ENCODE measurements at regions of chrX and their contacts with region 1.

Region 1: GRCh38 chrX:136028251-136028984 is 43.2 kb downstream of the SLC9A6 start:
- DNase-seq: no peak
- H3K4me3 ChIP-seq: no peak overlapping the region
- H3K27ac ChIP-seq: peak overlapping the region; percentile 80 to 84 (median 84)
- H3K4me1 ChIP-seq: peaks cover 6 to 45% (median 34%) of the 10 kb centered on the region in 4 donors
- H3K27me3 ChIP-seq: no peaks in the 10 kb centered on the region
- CTCF ChIP-seq: peak; percentile 60 to 75 (median 65)
- EP300 ChIP-seq: no peak
- POLR2A ChIP-seq: no peak

Region 2: DNA sequence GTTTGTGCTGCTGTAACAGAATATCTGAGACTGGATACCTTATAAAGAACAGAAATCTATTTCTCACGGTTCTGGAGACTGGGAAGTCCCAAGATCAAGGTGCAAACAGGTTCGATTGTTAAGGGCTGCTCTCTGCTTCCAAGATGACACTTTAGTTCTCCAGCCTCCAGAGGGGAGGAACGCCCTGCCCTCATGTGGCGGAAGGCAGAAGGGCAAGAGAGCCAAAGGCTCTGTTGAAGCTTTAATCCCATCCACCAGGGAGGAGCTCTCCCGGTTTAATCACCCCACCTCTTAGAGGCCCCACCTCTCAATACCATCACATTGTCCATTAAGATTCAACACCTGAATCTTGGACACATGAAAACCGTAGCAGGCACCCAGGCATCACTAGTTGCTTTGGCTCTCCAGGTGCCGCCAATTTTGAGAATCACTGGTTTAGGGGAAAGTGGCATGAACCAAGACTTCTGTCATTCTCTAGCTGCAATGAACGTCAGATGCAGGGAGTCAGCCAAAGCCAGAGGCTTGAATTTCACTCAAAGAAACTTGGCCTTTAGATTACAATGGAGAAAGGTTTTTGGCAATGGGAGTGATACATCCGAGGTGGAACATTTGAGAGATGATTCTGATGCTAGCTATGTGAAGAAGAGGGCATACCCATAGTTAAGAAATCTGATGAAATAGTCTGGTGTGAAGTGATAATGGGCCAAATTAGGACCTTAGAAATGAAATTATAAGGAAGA is 134.6 kb after region 1 on chrX:
- intact Hi-C with region 1: loop called (anchors 5 kb)
- DNase-seq: no peak
- H3K4me3 ChIP-seq: no peak overlapping the region
- H3K27ac ChIP-seq: peak overlapping the region; percentile 94 to 99 (median 98)
- H3K4me1 ChIP-seq: peaks cover 35 to 100% (median 67%) of the 10 kb centered on the region in 4 donors
- H3K27me3 ChIP-seq: no peaks in the 10 kb centered on the region
- CTCF ChIP-seq: peak; percentile 66 to 71 (median 67)
- EP300 ChIP-seq: no peak
- POLR2A ChIP-seq: no peak

Region 3: GRCh38 chrX:136214551-136214950 is 186.1 kb after region 1 on chrX:
- intact Hi-C with region 1: loop called (anchors 2 kb)
- DNase-seq: no peak
- H3K4me3 ChIP-seq: no peak overlapping the region
- H3K27ac ChIP-seq: peak overlapping the region; percentile 86 to 99 (median 96)
- H3K4me1 ChIP-seq: peaks cover 0 to 21% (median 17%) of the 10 kb centered on the region in 4 donors
- H3K27me3 ChIP-seq: no peaks in the 10 kb centered on the region
- CTCF ChIP-seq: no peak
- EP300 ChIP-seq: no peak
- POLR2A ChIP-seq: no peak

Region 4: DNA sequence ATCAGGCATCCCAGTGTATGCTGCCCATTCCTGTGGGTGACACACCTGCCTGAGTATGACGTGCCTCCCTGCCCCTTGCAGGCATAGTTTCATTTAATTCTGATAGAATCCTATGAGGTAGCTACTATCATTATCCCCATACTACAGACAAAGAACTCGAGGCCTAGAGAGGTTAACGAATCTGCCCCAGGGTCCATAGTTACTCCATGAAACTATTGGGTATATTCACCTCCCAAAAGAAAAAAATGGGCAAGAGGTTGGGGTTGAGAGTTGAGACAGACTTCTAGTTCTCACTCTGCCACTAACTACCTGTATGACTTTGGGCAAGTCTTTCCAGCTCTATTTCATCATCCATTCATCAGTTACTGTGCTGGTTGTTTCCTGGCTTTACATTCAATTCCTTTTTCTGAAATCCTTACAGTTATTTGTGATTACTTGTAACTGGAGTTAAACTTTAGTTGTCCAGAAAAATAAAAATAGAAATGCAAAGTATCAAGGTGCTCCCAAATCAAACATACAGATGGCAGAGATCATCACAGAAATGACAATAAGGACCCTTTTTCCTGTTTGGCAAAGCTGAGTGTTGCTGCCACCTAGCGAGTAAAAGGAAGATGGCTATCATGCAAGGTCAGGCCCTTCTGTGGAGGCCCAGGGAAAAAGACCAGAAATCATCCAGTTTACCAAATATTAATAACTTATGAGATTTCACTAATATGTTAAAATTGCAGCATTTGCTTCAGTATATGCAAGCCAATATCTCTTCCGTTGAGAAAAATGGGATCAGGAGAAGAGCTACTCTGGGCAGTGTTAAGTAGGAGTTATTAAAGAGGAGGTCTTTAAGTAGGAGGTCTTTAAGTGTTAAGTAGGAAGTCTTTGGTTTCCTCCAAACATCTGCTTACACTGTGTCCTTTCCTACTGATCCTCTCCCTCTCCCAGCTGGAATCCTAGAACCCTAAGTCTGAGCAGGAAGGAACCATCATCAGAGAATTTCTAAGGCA is 239.9 kb after region 1 on chrX:
- intact Hi-C with region 1: loop called (anchors 2 kb)
- DNase-seq: no peak
- H3K4me3 ChIP-seq: no peak overlapping the region
- H3K27ac ChIP-seq: no peak overlapping the region
- H3K4me1 ChIP-seq: no peaks in the 10 kb centered on the region
- H3K27me3 ChIP-seq: no peaks in the 10 kb centered on the region
- CTCF ChIP-seq: peak; percentile 74 to 79 (median 79)
- EP300 ChIP-seq: no peak
- POLR2A ChIP-seq: no peak

Region 5: DNA sequence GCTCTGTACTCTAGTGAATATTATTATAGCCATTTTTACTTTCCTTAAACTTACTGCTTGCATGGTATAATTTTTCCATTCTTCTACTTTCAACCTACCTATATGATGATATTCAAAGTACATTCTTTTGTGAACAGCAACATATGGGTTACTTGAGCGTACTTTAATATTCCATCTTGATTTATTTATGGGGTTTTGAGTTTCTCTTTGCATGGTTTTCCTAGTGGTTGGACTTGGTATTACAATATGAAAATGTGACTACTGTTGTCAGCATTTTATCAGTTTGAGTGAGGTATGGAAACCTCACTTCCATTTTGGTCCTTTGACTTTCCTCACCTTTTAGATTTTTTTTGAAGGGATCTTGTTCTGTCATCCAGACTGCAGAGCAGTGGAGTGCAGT is 308.2 kb after region 1 on chrX:
- intact Hi-C with region 1: no loop called
- DNase-seq: no peak
- H3K4me3 ChIP-seq: no peak overlapping the region
- H3K27ac ChIP-seq: no peak overlapping the region
- H3K4me1 ChIP-seq: no peaks in the 10 kb centered on the region
- H3K27me3 ChIP-seq: no peaks in the 10 kb centered on the region
- CTCF ChIP-seq: peak in 1 of 3 experiments; percentile 14
- EP300 ChIP-seq: no peak
- POLR2A ChIP-seq: no peak

Region 6: GRCh38 chrX:136577552-136577951 is 549.1 kb after region 1 on chrX:
- intact Hi-C with region 1: loop called (anchors 5 kb)
- DNase-seq: no peak
- H3K4me3 ChIP-seq: no peak overlapping the region
- H3K27ac ChIP-seq: no peak overlapping the region
- H3K4me1 ChIP-seq: peaks cover 0 to 4% (median 0%) of the 10 kb centered on the region in 4 donors
- H3K27me3 ChIP-seq: peaks cover 0 to 7% (median 0%) of the 10 kb centered on the region in 4 donors
- CTCF ChIP-seq: peak; percentile 53 to 63 (median 60)
- EP300 ChIP-seq: no peak
- POLR2A ChIP-seq: no peak

Region 7: DNA sequence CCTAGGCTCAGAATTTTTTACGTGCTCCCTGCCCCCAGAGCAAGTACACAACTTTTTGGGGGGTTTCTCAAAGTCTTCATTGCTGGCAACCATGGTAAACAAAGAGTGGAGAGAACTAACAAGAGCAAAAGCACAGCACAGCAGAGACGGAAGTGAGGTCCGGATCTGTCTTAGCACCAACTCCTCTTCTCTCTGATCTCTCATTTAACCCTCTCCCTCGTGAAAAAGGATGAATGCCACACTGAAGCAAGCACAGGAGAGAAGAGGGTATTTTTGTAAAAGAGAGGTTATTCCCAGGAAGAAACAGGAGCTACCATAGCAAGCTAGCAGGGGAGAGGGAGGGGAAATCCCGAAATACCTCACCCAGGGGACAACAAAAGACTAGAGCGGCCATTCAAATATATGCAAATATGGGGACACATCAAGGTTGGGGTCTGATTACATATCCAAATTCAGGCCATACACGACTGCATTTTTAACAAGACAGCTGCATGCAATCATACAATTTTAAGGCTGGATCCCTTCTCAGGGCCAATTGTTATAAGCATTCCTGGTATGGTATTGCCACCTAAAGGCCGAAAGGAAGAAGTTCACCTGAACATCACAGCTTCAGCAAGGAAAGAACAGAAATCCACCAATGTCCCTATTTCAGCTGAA is 666.1 kb after region 1 on chrX:
- intact Hi-C with region 1: loop called (anchors 10 kb)
- DNase-seq: no peak
- H3K4me3 ChIP-seq: no peak overlapping the region
- H3K27ac ChIP-seq: no peak overlapping the region
- H3K4me1 ChIP-seq: peaks cover 0 to 4% (median 0%) of the 10 kb centered on the region in 4 donors
- H3K27me3 ChIP-seq: no peaks in the 10 kb centered on the region
- CTCF ChIP-seq: peak; percentile 51 to 53 (median 53)
- EP300 ChIP-seq: no peak
- POLR2A ChIP-seq: no peak

Region 8: DNA sequence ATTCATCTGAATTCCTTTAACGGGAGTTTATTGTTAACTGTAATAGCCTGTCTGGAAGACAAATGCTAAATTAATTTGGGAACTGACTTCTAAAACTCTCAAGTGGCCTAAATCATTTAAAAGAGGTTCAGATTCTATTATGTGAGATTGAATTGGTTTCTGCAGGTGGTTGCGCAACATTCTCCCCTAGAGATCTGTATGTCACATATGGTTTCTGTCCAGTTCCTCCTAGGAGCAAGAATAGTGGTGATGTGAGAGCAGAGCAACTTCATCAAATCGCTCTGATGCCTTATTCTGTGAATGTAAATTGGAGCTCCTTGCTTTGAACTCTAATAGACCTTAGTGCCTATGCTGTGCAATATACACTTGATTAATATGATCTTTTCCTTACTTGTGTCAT is 1150.0 kb after region 1 on chrX:
- intact Hi-C with region 1: no loop called
- DNase-seq: no peak
- H3K4me3 ChIP-seq: no peak overlapping the region
- H3K27ac ChIP-seq: no peak overlapping the region
- H3K4me1 ChIP-seq: no peaks in the 10 kb centered on the region
- H3K27me3 ChIP-seq: no peaks in the 10 kb centered on the region
- CTCF ChIP-seq: no peak
- EP300 ChIP-seq: no peak
- POLR2A ChIP-seq: no peak